Posterior vena cava (tissue), 2 donors: ENCODE measurements at regions of chr12 and their contacts with region 1.

Region 1: GRCh38 chr12:32455607-32456071 is 56.3 kb downstream of the FGD4 start:
- DNase-seq: no peak

Region 2: DNA sequence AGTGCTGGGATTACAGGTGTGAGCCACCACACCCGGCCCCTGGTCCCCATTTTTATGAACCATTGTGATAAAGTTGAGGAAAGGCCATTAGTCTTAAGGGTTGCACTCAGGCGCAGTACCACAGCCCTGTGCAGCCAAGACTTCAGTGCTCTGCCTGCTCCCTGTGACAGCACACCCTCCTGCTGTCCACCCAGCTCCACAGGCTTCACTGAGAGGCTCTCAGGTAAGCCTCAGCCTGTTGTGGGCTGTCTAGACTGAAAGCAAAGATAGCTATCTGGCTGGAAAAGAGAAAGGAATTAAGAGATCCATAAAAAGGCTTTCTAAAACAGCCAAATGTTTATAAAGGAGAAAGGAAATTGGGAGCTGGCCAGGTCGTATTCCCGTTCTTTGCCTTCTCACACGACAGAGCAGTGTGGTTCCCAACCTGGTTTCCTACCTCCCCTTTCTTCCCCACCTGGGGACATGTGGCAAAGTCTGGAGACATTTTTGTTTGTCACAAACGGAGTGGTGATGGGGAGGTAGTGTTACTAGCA is 204.3 kb after region 1 on chr12:
- intact Hi-C with region 1: loop called in 1 of 2 experiments (anchors 10 kb)
- DNase-seq: no peak

Region 3: GRCh38 chr12:32671930-32672780 is 216.5 kb after region 1 on chr12:
- intact Hi-C with region 1: loop called (anchors 5 to 10 kb)
- DNase-seq: no peak